ENCODE measurements at regions of chr9 and their contacts with region 1.

Region 1: DNA sequence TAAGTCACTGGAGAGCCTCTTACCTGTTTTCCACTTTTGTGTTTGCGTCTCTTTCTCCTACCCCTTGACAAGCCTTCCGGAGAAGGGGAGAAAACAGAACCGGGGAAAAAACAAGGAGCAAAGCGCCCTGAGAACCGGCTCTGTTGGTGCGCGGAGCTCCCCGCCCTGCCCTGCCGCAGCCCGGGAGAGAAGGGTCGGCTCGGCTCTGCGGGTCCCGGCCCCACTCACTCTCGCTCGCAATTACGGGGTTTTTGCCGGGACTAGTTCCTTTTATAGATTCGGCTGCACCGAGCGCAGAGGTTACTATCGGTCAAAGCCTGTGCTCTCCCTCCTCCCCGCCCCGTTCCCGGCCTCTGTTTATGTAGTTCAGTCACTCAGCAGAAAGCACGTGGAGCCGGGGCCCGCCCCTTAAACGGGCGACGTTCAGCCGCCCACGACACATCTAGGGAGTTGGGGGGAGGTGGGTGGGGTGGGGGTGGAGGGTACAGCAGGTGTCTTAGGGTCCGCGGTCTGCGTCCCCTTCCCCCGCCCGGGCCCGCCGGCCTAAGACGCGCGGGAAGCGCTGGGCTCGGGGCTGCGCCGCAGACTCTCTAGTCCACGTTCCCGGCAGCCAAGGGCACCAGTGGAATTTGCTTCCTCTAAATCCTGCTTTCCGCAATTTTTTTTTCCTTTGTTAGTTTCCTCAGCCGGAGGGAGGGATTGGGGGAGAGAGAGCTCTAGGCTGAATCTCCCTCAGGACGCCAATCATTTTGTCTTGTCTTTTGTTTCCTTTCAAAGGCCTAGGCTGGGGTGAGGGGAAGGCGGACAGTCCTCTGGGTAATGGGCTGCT is at the start of gene ABCA1:
- DNase-seq: peak; percentile 57 to 89 (median 74)
- ATAC-seq: peak; percentile 81
- H3K4me3 ChIP-seq: peak within 1 kb of the TSS; percentile 69
- H3K4me3 Mint-ChIP-seq: peak within 1 kb of the TSS; percentile 92
- H3K27ac ChIP-seq: peak within 1 kb of the TSS in 1 of 2 donors; percentile 15
- H3K27ac Mint-ChIP-seq: peak within 1 kb of the TSS; percentile 86
- H3K4me1 ChIP-seq: peaks cover 27% of the 10 kb centered on the region
- H3K4me1 Mint-ChIP-seq: peaks cover 26% of the 10 kb centered on the region
- H3K27me3 ChIP-seq: no peaks in the 10 kb centered on the region
- H3K27me3 Mint-ChIP-seq: no peaks in the 10 kb centered on the region
- CTCF ChIP-seq: no peak
- total RNA-seq, gene ABCA1: 14.1 to 16.9 TPM

Region 2: DNA sequence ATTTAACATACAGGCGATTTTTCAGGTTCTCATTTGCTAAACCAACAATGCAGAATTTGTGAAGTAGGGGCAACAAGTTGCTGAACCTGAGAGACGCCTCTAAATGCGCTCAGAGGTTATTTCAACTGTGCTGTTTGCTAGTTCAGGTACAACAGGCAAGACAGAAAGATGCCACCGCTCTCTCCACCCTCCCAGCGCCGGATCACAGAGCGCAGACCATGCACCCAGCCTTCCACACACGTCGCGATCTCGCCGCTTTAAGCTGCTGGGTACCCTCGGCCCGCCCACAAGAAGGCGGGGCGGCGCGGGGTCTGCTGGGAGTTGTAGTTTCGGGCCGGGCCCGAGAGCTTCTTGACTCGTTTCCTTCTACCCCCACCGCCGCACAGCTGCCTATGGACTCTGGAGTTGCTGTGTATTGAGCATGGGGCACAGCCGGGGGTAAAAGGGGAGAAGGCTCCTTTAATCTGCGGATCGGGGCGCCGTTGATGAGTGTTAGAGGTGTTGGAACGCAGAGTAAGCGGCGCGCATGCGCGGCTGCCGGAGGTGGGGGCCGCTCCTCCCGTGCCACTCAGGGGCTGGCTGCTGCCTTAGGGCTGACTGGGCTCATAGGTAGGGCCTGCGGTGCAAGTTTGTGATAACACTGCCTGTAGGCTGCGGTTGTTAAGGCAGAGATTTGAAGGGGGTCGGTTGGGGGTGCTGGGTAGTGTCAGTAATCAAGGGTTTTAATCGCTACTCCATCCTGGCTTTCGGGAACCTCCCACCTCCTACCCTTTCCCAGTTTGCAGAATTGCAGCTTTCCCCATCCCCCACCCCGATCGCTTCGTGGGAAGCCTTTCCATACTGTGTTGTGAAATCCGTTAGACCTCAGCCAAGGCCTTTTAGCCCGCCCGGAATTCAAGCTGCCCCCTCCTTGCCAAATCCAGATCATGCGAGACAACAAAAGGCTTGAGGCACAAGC is 40.2 kb after region 1 on chr9:
- CTCF ChIA-PET with region 1: interaction called, 8 read pairs
- POLR2A ChIA-PET with region 1: interaction called, 3 read pairs
- intact Hi-C with region 1: loop called (anchors 1 kb)
- DNase-seq: peak; percentile 80 to 92 (median 86)
- ATAC-seq: peak; percentile 97
- H3K4me3 ChIP-seq: peak overlapping the region; percentile 75
- H3K4me3 Mint-ChIP-seq: peak overlapping the region; percentile 95
- H3K27ac ChIP-seq: no peak overlapping the region
- H3K27ac Mint-ChIP-seq: peak overlapping the region; percentile 77
- H3K4me1 ChIP-seq: peaks cover 14% of the 10 kb centered on the region
- H3K4me1 Mint-ChIP-seq: peaks cover 27% of the 10 kb centered on the region
- H3K27me3 ChIP-seq: no peaks in the 10 kb centered on the region
- H3K27me3 Mint-ChIP-seq: peaks cover 8% of the 10 kb centered on the region
- CTCF ChIP-seq: no peak

Region 3: DNA sequence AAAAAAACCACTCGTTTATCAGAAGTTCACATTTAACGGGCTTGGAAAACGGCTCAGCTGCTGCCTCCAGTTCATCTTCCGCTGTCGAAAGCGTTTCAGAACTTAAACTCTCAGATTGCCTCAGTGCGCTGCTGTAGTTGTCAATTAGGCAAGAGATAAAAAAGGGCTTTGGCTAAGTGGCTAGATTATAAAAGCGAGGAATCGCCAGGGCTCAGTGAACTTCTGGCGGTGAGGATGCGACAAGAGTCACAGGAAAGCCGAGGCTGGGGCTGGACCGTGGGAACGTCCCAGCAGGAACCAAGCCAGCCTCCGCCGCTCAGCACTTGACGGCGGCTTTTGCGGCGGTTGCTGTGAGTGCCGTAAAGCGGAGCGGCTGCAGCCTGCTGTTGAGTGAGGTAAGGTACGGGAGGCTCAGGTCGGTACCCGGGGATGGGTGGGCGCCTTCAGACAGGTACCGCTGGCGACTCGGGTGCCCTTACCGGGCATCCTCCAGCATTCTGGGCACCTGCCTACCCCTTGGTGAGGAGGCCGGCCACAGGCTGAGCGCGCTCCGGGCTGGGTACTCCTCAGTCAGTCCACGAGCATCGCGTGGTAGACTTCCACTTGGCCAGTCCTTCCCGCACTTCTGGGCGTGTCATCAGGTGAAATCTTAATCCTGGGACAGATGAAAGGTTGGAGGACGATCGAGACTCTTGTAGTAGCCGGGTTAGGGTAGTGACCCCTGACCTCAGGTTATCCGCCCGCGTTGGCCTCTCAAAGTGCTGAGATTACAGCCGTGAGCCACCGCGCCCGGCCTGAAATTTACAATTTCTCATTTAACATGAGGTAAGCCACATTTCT is 629.9 kb after region 1 on chr9 and contains the start of gene FKTN:
- CTCF ChIA-PET with region 1: no interaction called
- POLR2A ChIA-PET with region 1: no interaction called
- intact Hi-C with region 1: no loop called
- DNase-seq: peak; percentile 56 to 87 (median 72)
- ATAC-seq: peak; percentile 96
- H3K4me3 ChIP-seq: peak within 1 kb of the TSS; percentile 94
- H3K4me3 Mint-ChIP-seq: peak within 1 kb of the TSS; percentile 93
- H3K27ac ChIP-seq: peak within 1 kb of the TSS; percentile 30 to 47
- H3K27ac Mint-ChIP-seq: peak within 1 kb of the TSS; percentile 83
- H3K4me1 ChIP-seq: peaks cover 12% of the 10 kb centered on the region
- H3K4me1 Mint-ChIP-seq: peaks cover 19% of the 10 kb centered on the region
- H3K27me3 ChIP-seq: no peaks in the 10 kb centered on the region
- H3K27me3 Mint-ChIP-seq: no peaks in the 10 kb centered on the region
- CTCF ChIP-seq: no peak
- total RNA-seq, gene FKTN: 5.7 to 5.8 TPM

Measured in CD4-positive, alpha-beta T cell (primary cell).